Activated CD8-positive, alpha-beta memory T cell treated with anti-CD3 and anti-CD28 coated beads, Interleukin-2, amount 10 ng/mL, durations not matched to agents 7 days and 5 days (primary cell): ENCODE measurements at regions of chr13 and their contacts with region 1.

Region 1: DNA sequence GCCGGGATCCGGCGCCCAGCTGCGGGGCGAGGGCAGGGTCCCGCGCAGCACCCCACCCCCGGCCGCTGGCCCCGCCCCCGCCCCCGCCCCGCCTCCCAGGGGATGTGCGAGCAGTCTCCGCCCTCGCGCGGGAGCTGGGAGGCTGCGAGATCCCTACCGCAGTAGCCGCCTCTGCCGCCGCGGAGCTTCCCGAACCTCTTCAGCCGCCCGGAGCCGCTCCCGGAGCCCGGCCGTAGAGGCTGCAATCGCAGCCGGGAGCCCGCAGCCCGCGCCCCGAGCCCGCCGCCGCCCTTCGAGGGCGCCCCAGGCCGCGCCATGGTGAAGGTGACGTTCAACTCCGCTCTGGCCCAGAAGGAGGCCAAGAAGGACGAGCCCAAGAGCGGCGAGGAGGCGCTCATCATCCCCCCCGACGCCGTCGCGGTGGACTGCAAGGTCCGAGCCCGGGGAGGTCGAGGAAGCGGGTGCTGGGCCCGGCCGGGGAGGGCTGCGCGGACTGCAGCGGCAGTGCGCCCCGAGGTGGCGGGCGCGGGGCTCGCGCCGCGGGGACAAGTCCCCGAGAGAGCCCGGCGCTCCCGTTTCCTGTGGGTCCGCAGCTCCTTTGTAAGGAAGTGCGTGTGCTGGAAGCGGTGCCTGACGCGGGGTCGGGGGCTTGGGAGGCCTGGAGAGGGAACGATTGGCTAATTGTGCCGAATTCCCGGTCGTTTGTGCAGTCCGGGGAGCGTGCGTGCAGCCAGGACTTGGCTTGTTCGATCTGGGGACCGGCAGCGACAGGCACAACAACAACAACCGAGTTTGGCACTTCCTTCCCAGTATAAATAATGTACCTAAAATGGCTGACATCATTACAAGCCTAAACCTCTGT is at the start of gene ITM2B:
- DNase-seq: peak; percentile 75
- ATAC-seq: peak; percentile 83
- H3K4me3 Mint-ChIP-seq: peak within 1 kb of the TSS; percentile 92
- H3K27ac Mint-ChIP-seq: peak within 1 kb of the TSS; percentile 87
- H3K4me1 Mint-ChIP-seq: peaks cover 40% of the 10 kb centered on the region
- H3K27me3 Mint-ChIP-seq: peaks cover 21% of the 10 kb centered on the region
- total RNA-seq, gene ITM2B: 163 to 197 TPM

Region 2: GRCh38 chr13:48126944-48127830 is 106.1 kb before region 1 on chr13:
- CTCF ChIA-PET with region 1: interaction called, 23 read pairs
- DNase-seq: peak; percentile 42
- ATAC-seq: peak; percentile 89
- H3K4me3 Mint-ChIP-seq: no peak overlapping the region
- H3K27ac Mint-ChIP-seq: peak overlapping the region; percentile 30
- H3K4me1 Mint-ChIP-seq: peaks cover 12% of the 10 kb centered on the region
- H3K27me3 Mint-ChIP-seq: peaks cover 4% of the 10 kb centered on the region

Region 3: DNA sequence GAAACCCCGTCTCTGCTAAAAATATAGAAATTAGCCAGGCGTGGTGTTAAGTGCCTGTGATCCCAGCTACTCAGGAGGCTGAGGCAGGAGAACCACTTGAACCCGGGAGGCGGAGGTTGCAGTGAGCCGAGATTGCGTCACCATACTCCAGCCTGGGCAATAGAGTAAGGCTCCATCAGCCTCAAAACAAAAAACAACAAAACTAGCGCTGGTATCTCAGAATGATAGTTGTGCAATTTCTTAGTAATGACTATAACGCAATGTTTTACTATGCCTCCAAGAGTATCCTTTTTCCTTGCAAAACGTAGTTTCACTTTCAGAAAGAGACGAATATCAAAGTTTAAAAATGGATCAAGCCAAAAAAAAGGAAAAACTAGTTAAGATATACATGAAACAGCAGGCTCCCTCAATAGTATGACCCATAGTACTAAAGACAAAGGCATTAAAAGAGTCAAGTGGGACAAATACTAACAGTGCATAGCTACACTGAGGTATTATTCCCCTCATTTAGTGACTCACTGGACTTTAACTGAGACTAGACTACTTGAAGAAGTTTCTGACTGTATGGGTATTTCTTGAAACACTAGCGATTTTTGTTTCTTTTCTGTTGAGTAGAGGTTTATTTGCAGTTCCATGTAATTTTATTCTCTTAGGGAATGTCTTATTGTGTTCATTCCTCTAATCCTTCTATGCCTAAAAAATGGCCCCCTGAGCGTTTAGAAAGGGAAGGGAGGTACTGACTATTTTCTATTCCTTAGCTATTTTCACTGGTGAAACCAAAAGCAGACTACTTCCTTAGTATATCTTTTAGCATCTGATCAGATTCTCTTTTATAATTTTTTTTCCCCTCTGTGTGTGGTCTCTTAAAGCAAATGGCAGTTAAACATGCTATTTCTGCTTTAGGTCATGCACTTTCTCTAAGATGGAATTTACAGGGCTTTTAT is 10.6 kb before region 1 on chr13:
- CTCF ChIA-PET with region 1: interaction called, 19 read pairs
- DNase-seq: no peak
- ATAC-seq: no peak
- H3K4me3 Mint-ChIP-seq: no peak overlapping the region
- H3K27ac Mint-ChIP-seq: peak overlapping the region; percentile 7
- H3K4me1 Mint-ChIP-seq: peaks cover 34% of the 10 kb centered on the region
- H3K27me3 Mint-ChIP-seq: peaks cover 15% of the 10 kb centered on the region